Heart left ventricle (tissue), 16 donors: ENCODE measurements at regions of chr11 and their contacts with region 1.

Region 1: GRCh38 chr11:86735462-86736302 is 63.3 kb upstream of the ME3 start:
- DNase-seq: no peak
- ATAC-seq: no peak
- H3K4me3 ChIP-seq: no peak overlapping the region
- H3K27ac ChIP-seq: no peak overlapping the region
- H3K4me1 ChIP-seq: peaks cover 0 to 35% (median 14%) of the 10 kb centered on the region in 12 donors
- H3K27me3 ChIP-seq: no peaks in the 10 kb centered on the region
- CTCF ChIP-seq: no peak
- POLR2A ChIP-seq: no peak

Region 2: DNA sequence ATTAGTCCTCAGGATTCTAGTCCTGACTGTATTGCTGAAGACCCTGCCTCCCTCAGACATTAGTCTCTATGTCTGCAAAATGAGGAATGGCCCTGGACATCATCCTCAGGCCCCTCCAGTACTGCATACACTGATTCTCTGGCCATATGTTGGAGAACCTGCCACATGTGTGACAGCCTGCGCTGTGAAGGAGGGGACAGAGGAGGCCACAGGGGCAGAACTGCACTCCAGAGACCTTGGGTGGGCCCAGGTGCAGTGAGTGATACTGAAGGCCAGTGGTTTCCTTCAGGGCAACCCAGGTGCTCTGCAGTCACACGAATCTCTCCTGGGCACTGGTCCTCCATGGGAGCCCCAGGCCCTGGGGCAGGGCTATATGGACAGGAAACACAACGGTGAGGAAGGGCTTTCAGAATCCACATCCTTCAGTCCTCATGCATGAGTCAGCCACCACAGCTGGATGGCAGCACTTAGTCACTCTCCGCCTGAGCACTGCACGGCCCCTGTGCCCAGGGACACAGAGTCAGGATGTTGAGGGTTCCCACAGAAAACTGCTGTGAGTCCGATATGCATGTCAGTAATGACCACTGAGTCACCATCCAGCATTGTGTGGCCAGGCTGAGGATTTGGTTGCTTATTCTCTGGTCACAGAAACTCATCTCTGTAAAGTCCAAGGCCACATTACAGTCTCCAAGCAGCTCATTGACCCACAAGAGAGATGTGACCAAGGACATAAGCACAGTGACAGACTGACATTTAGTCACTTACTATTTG is 103.0 kb before region 1 on chr11:
- intact Hi-C with region 1: loop called in 1 of 10 experiments (anchors 5 kb)
- DNase-seq: peak in 1 of 5 donors; percentile 55
- ATAC-seq: peak in 3 of 4 donors; percentile 32 to 57 (median 55)
- H3K4me3 ChIP-seq: no peak overlapping the region
- H3K27ac ChIP-seq: no peak overlapping the region
- H3K4me1 ChIP-seq: peaks cover 0 to 44% (median 30%) of the 10 kb centered on the region in 12 donors
- H3K27me3 ChIP-seq: no peaks in the 10 kb centered on the region
- CTCF ChIP-seq: peak in 7 of 12 donors; percentile 18 to 46 (median 32)
- POLR2A ChIP-seq: no peak

Region 3: DNA sequence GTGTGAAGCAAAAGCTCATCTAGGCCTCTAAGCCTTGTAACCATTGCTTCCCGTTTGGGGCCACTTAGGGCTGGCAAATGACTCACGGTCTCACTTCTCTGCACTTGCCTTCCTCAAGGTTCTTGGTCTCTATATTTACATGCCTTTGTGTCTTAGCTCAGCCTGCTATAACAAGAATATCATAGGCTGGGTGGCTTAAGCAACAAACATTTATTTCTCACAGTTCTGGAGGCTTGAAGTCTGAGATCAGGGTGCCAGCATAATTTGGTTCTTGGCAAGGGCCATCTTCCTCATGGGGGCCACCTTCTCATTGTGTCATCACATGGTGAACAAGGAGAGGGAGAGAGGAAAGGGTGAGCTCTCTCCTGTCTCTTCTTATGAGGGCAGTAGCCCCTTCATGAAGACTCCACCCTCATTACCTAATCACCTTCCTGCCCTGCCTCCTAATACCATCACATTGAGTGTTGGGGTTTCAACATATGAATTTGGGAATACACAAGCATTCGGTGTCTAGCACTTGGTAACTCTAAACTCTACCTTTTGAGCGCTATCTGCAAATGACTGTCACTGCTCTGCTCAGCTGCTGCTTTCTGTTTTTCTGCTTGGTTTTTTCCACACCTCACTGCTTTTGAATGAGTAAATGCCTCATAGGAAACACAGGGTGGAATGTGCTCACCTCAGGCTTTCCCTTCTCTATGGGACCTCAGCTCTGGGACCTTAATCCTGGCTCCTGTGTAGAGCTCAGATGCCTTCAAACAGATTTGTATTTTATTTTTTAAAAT is 47.1 kb before region 1 on chr11:
- intact Hi-C with region 1: loop called in 1 of 10 experiments (anchors 5 kb)
- DNase-seq: no peak
- ATAC-seq: peak in 3 of 4 donors; percentile 30 to 65 (median 37)
- H3K4me3 ChIP-seq: no peak overlapping the region
- H3K27ac ChIP-seq: peak overlapping the region in 5 of 12 donors; percentile 1 to 27 (median 24)
- H3K4me1 ChIP-seq: peaks cover 0 to 29% (median 5%) of the 10 kb centered on the region in 12 donors
- H3K27me3 ChIP-seq: no peaks in the 10 kb centered on the region
- CTCF ChIP-seq: no peak
- POLR2A ChIP-seq: no peak

Region 4: GRCh38 chr11:86696004-86696403 is 39.7 kb before region 1 on chr11:
- intact Hi-C with region 1: loop called in 1 of 10 experiments (anchors 5 kb)
- DNase-seq: no peak
- ATAC-seq: peak in 1 of 4 donors; percentile 80
- H3K4me3 ChIP-seq: no peak overlapping the region
- H3K27ac ChIP-seq: peak overlapping the region in 2 of 12 donors; percentile 12 to 44
- H3K4me1 ChIP-seq: peaks cover 0 to 11% (median 3%) of the 10 kb centered on the region in 12 donors
- H3K27me3 ChIP-seq: no peaks in the 10 kb centered on the region
- CTCF ChIP-seq: no peak
- POLR2A ChIP-seq: no peak